Aorta (tissue), 5 donors: ENCODE measurements at regions of chr22 and their contacts with region 1.

Region 1: DNA sequence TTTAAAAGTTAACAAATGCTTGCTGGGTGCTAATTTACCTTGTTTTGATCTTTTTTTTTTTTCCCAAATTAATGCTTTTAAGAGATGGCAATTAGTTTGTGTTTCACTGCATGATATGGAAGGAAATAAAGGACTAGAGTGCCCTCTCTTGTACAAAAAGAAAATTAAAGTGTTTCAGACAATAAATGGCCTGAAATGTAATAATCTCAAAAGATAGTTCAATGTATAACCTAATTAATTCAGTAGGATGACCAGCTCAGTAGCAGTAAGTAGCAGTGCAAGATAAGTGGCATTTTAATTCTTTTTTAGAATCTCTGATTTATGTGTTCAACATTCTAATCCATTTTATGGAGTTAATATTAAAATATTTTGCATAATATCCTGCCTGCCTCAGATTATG is 39.9 kb upstream of the MYO18B start:
- DNase-seq: no peak
- ATAC-seq: no peak
- H3K4me3 ChIP-seq: no peak overlapping the region
- H3K27ac ChIP-seq: no peak overlapping the region
- H3K4me1 ChIP-seq: no peaks in the 10 kb centered on the region
- H3K27me3 ChIP-seq: no peaks in the 10 kb centered on the region

Region 2: GRCh38 chr22:25465949-25466348 is 236.1 kb before region 1 on chr22:
- intact Hi-C with region 1: loop called (anchors 5 to 10 kb)
- DNase-seq: no peak
- ATAC-seq: no peak
- H3K4me3 ChIP-seq: no peak overlapping the region
- H3K27ac ChIP-seq: no peak overlapping the region
- H3K4me1 ChIP-seq: no peaks in the 10 kb centered on the region
- H3K27me3 ChIP-seq: no peaks in the 10 kb centered on the region

Region 3: DNA sequence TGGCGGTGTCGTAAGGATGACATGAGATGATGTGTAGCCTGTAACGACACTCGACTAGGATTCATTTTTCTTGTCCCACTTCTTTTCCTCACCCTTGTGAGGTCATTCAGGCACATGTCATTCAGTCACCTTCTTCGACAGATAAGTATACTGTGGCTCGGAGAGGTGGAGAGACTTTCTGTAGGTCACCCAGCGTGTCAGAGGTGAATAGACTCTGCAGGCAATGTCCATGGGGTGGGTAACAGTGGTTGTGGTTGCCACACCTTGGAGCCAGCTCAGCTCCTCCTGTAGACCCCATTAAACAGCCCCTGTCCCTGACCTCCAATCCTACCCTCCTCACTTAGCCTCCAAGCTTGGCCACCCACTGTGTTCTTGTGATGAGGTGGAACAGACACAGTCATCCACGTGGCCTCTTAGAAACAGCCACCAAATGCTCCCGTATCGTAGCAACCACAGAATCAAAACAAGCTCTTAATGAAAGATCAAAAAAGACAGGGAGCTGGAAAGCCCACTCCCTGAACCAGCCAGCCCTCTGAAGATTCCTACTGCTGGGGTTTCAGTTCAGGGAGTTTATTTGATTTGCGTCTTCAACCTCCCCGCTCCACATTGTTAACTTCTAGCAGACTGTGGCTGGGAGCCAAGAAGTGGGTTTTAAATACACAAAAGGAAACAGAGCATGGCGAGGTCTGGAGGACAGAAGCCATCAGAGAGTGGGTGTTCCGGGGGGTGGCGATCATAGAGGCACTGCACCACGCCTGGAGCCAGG is 226.6 kb before region 1 on chr22:
- intact Hi-C with region 1: loop called in 1 of 2 experiments (anchors 10 kb)
- DNase-seq: no peak
- ATAC-seq: peak; percentile 24
- H3K4me3 ChIP-seq: no peak overlapping the region
- H3K27ac ChIP-seq: no peak overlapping the region
- H3K4me1 ChIP-seq: no peaks in the 10 kb centered on the region
- H3K27me3 ChIP-seq: no peaks in the 10 kb centered on the region